Ascending aorta (tissue), 2 donors: ENCODE measurements at regions of chr13 and their contacts with region 1.

Region 1: DNA sequence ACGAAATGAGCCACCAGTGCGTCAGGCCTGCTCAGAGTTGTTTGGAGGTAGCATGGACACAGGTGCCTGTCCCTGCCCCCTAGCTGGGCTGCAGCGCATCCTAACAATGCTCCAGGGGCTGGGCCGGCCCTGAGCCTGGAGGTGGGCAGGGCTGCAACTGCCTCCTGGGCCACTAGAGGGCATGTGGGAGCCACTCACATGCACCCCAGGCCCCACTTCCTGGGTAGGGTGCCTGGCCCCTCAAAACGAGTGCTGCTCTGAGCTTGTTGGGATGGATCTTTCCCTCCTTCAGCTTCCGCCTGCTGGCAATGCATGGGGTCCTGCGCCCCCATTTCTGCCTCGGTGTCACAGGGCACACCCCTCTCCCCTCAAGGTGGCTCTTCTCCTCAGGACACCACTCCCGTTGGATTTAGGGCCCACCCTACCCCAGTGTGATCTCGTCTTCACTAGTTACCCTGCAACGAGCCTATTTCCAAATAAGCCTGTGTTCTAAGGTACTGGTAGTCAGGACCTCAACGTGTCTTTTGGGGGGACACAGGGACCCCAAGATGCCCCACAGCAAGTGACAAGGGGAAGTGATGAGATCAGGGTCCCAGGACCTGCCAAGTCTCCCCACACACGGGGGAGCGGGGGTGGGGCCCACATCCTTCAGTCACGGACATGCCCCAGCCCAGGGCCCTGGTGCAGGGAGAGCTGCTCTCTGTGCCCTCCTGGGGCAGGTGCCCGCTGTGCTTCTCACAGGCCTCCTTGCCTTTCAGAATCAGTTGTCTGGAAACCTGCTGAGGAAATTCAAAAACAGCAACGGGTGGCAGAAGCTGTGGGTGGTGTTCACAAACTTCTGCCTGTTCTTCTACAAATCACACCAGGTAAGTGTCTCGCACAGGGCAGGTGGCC is 131.3 kb downstream of the STK24 start:
- DNase-seq: peak in 1 of 2 donors; percentile 81
- H3K4me3 ChIP-seq: no peak overlapping the region
- H3K27ac ChIP-seq: no peak overlapping the region
- H3K4me1 ChIP-seq: peaks cover 2 to 9% of the 10 kb centered on the region in 2 donors
- H3K27me3 ChIP-seq: no peaks in the 10 kb centered on the region
- CTCF ChIP-seq: peak; percentile 91 to 96 (median 95)

Region 2: GRCh38 chr13:98653463-98653985 is 207.9 kb after region 1 on chr13:
- intact Hi-C with region 1: loop called (anchors 1 kb)
- DNase-seq: peak in 1 of 2 donors; percentile 84
- H3K4me3 ChIP-seq: no peak overlapping the region
- H3K27ac ChIP-seq: no peak overlapping the region
- H3K4me1 ChIP-seq: no peaks in the 10 kb centered on the region
- H3K27me3 ChIP-seq: no peaks in the 10 kb centered on the region
- CTCF ChIP-seq: peak; percentile 70 to 90 (median 84)